ENCODE measurements at regions of chr2 and their contacts with region 1.

Region 1: GRCh38 chr2:69535817-69536241 is 98.6 kb upstream of the NFU1 start:
- DNase-seq: no peak
- H3K4me3 ChIP-seq: no peak overlapping the region
- CTCF ChIP-seq: no peak

Region 2: GRCh38 chr2:69581774-69582581 is 46.1 kb after region 1 on chr2:
- in situ Hi-C with region 1: no loop called
- DNase-seq: no peak
- H3K4me3 ChIP-seq: no peak overlapping the region
- CTCF ChIP-seq: no peak

Region 3: DNA sequence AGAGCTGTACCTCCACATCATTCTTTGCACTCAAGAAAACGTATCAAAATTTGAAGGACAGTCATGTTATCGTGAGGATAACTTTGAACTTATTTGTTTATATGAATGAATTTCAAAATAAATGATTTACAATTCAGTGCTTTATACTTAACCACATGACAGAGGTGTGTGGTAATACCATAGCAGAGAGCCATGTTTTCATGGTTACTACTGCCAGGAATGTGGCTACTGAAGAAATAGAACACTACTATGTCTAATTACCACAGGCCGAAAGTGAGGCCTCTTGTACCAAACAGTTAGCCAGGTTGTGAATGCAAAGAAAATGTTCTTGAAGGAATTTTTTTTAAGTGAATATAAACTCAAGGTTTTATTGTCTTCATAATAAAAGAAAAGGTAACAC is 58.5 kb after region 1 on chr2:
- in situ Hi-C with region 1: no loop called
- DNase-seq: peak; percentile 70
- H3K4me3 ChIP-seq: no peak overlapping the region
- CTCF ChIP-seq: no peak

Region 4: DNA sequence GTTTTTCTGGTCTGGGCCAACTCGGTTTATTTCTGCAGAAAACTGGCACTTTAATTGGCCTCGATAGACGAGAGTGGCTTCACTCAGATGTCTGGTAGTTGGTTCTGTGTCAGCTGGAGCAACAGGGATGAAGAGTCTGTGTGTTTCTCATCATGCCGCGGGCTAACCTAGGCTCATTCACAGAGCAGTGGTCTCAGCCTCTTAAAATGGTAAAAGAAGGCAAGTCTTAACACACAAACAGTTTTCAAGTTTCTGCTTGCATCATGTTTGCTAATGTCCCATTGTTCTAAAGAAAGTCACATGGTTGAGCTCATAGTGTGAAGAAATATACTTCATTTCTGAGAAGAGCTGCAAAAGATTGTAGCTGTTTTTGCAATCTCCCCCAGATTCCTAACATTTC is 168.6 kb after region 1 on chr2:
- in situ Hi-C with region 1: no loop called
- DNase-seq: no peak
- H3K4me3 ChIP-seq: no peak overlapping the region
- CTCF ChIP-seq: no peak

Region 5: DNA sequence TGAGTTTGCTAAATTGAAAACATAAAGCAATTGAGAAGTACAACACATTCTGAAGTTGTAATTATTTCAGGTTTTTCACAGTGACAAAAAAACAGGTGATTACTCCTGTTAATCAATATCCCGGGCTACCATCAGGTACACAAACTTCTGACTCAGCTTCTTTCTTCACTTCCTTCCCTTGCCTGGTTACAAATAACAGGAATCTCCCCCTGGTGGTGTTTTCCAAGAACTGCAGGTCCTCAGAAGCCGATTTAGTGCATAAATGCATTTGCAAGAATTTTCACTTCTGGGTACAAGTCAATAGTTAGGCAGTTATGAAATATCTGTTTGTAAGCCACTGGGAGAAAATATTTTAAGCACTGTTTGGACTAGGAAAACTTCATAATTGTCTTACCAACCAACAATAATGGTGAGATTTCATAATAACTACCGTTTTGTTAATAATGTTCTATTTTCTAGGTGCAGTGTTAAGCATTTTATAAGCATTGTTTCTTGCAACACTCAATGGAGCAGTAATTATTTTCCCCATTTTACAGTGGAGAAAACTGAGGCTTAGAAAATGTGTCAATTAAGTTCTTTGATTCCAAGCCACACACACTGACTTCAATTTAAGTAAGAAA is 281.2 kb after region 1 on chr2:
- in situ Hi-C with region 1: loop called (anchors 25 kb)
- DNase-seq: peak; percentile 86
- H3K4me3 ChIP-seq: no peak overlapping the region
- CTCF ChIP-seq: peak; percentile 89

Measured in astrocyte of the cerebellum (primary cell).